GM12878 (cell line): ENCODE measurements at regions of chr1 and their contacts with region 1.

Region 1: GRCh38 chr1:101506541-101507164 is 269.8 kb downstream of the S1PR1 start:
- DNase-seq: peak; percentile 21
- ATAC-seq: peak; percentile 93
- H3K4me3 ChIP-seq: no peak overlapping the region
- H3K27ac ChIP-seq: no peak overlapping the region
- H3K4me1 ChIP-seq: no peaks in the 10 kb centered on the region
- H3K27me3 ChIP-seq: no peaks in the 10 kb centered on the region
- CTCF ChIP-seq: peak; percentile 61 to 77 (median 68)
- EP300 ChIP-seq: no peak
- POLR2A ChIP-seq: no peak
- RAD21 ChIP-seq: peak; percentile 53; the same call in 1 of the 2 replicates

Region 2: DNA sequence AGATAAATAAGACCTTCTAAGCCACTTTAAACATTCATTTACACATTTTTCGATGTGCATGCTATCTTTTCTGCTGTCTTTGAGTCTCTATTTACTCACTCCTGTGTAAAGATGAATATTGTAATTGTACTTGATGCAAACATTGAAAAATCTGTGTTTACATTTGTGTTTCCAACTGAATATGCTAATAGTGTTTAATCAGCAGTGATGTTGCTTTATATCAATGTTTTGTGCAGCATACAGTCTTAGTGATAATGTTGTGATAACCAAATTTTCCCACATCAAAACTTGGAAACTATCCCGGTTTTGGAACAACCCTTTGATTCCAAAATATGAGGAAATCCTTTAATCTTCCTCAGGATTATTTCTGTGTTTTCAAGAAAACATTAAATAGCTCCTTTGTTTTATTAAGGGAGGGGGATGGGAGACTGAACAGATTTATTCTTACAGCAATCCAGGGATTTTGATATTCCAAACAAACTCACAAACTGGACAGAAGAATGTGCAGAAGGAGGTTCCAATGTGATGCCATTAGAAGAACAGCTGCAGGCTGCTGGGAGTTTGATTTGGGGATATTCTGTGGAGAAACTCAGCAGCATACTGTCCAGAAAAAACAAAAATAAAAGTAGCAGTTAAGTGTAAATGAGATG is 21.8 kb before region 1 on chr1:
- CTCF ChIA-PET with region 1: interaction called, 11 read pairs
- POLR2A ChIA-PET with region 1: no interaction called
- RAD21 ChIA-PET with region 1: no interaction called
- SMC1A ChIA-PET with region 1: no interaction called
- in situ Hi-C with region 1: no loop called
- intact Hi-C with region 1: no loop called
- DNase-seq: no peak
- ATAC-seq: no peak
- H3K4me3 ChIP-seq: no peak overlapping the region
- H3K27ac ChIP-seq: no peak overlapping the region
- H3K4me1 ChIP-seq: no peaks in the 10 kb centered on the region
- H3K27me3 ChIP-seq: no peaks in the 10 kb centered on the region
- CTCF ChIP-seq: no peak
- EP300 ChIP-seq: no peak
- POLR2A ChIP-seq: no peak
- RAD21 ChIP-seq: no peak

Region 3: GRCh38 chr1:101496109-101496508 is 10.5 kb before region 1 on chr1:
- CTCF ChIA-PET with region 1: interaction called, 23 read pairs
- POLR2A ChIA-PET with region 1: no interaction called
- RAD21 ChIA-PET with region 1: no interaction called
- SMC1A ChIA-PET with region 1: interaction called, 3 read pairs
- in situ Hi-C with region 1: no loop called
- intact Hi-C with region 1: no loop called
- DNase-seq: no peak
- ATAC-seq: no peak
- H3K4me3 ChIP-seq: no peak overlapping the region
- H3K27ac ChIP-seq: no peak overlapping the region
- H3K4me1 ChIP-seq: no peaks in the 10 kb centered on the region
- H3K27me3 ChIP-seq: no peaks in the 10 kb centered on the region
- CTCF ChIP-seq: no peak
- EP300 ChIP-seq: no peak
- POLR2A ChIP-seq: no peak
- RAD21 ChIP-seq: no peak